CD8-positive, alpha-beta T cell (primary cell): ENCODE measurements at regions of chr2 and their contacts with region 1.

Region 1: DNA sequence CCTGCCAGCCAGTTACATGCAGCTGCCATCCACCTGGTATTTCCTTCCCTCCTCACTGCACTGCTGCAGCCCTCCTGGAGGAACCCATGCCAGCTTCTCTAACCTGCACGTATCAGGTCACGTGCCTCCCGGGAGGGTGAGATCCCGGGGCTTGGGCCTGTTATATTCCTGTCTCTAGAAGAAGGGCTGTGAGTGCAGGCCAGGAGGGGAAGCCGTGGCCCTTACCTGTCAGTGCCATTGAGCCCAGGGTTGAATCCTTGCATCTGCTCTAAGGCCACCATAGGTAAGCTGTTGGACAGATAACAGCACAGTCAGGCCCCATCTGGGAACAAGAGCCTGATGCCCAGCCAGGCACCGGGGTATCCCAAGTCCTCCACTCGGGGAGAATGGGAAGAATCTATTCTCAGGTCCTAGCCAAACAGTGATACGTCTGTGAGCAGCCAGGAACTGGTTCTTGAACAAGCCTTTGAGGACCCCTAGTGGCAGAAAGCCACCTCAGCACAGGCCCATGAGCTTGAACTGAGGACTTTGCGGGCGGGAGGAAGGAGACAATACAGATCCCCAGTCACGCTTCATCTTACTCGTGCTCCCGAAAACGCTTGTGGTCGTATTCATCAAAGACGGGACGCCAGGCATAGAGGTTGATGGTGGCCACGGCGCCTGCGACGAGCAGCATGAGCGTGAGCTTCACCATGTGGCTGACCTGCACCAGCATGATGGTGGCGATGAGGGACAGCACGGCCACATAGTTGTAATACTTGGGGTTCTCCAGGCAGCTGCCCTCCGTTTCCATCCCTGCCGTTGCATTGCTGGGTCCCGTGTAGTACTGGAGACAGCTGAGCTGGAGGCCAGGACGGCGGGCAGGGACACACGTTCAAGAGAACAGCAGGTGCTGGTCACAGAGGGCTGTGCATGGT is 34.4 kb downstream of the CENPO start:
- DNase-seq: peak; percentile 52 to 86 (median 71)
- ATAC-seq: peak; percentile 93
- H3K4me3 ChIP-seq: no peak overlapping the region
- H3K4me3 Mint-ChIP-seq: no peak overlapping the region
- H3K27ac ChIP-seq: peak overlapping the region in 1 of 2 experiments; percentile 49
- H3K27ac Mint-ChIP-seq: no peak overlapping the region
- H3K4me1 ChIP-seq: no peaks in the 10 kb centered on the region
- H3K4me1 Mint-ChIP-seq: peaks cover 12% of the 10 kb centered on the region
- H3K27me3 ChIP-seq: no peaks in the 10 kb centered on the region
- H3K27me3 Mint-ChIP-seq: no peaks in the 10 kb centered on the region
- CTCF ChIP-seq: peak; percentile 67

Region 2: GRCh38 chr2:24404491-24404921 is 423.1 kb before region 1 on chr2:
- CTCF ChIA-PET with region 1: interaction called, 209 read pairs
- POLR2A ChIA-PET with region 1: interaction called, 3 read pairs
- intact Hi-C with region 1: no loop called
- DNase-seq: no peak
- ATAC-seq: no peak
- H3K4me3 ChIP-seq: no peak overlapping the region
- H3K4me3 Mint-ChIP-seq: no peak overlapping the region
- H3K27ac ChIP-seq: no peak overlapping the region
- H3K27ac Mint-ChIP-seq: no peak overlapping the region
- H3K4me1 ChIP-seq: no peaks in the 10 kb centered on the region
- H3K4me1 Mint-ChIP-seq: peaks cover 4% of the 10 kb centered on the region
- H3K27me3 ChIP-seq: peaks cover 0 to 4% of the 10 kb centered on the region in 2 experiments
- H3K27me3 Mint-ChIP-seq: peaks cover 9% of the 10 kb centered on the region
- CTCF ChIP-seq: no peak

Region 3: GRCh38 chr2:24421668-24422067 is 405.9 kb before region 1 on chr2:
- CTCF ChIA-PET with region 1: interaction called, 27 read pairs
- POLR2A ChIA-PET with region 1: no interaction called
- intact Hi-C with region 1: no loop called
- DNase-seq: peak; percentile 13 to 69 (median 51)
- ATAC-seq: no peak
- H3K4me3 ChIP-seq: no peak overlapping the region
- H3K4me3 Mint-ChIP-seq: no peak overlapping the region
- H3K27ac ChIP-seq: no peak overlapping the region
- H3K27ac Mint-ChIP-seq: no peak overlapping the region
- H3K4me1 ChIP-seq: no peaks in the 10 kb centered on the region
- H3K4me1 Mint-ChIP-seq: no peaks in the 10 kb centered on the region
- H3K27me3 ChIP-seq: no peaks in the 10 kb centered on the region
- H3K27me3 Mint-ChIP-seq: no peaks in the 10 kb centered on the region
- CTCF ChIP-seq: no peak

Region 4: DNA sequence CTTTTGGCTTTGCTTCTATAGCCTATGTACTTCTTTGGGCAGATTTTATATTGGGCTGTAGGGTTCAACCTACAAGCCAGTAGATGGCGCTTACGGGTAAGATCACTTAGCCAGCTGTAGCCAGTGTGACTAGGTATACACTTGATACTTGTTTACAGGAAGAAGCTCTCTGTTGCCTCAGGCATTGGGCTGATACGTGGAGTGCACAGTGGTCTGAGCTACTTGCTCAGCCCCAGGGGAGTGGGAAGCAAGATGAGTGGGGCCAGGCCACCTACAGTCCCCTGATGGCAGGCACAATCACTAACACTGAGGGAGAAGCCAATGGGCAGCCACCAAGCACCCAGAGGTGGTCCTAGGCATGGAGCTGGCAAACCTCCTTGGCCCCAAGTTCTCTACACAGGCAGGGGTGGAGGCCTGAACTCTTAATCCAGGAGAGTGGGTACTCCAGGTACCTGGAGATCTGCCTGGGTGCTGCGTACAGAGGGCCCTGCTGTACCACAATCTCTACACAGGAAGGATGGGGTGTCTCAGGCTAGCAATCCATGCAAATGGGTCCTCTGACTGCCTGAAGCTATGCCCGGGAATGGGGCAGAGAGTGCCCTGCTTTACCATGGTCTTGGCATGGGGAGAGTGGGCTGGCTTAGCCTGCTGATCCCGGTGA is 214.3 kb before region 1 on chr2:
- CTCF ChIA-PET with region 1: no interaction called
- POLR2A ChIA-PET with region 1: no interaction called
- intact Hi-C with region 1: loop called in 1 of 2 experiments (anchors 1 kb)
- DNase-seq: peak in 4 of 9 experiments; percentile 6 to 74 (median 42)
- ATAC-seq: peak; percentile 74
- H3K4me3 ChIP-seq: no peak overlapping the region
- H3K4me3 Mint-ChIP-seq: no peak overlapping the region
- H3K27ac ChIP-seq: peak overlapping the region in 1 of 2 experiments; percentile 51
- H3K27ac Mint-ChIP-seq: peak overlapping the region; percentile 68
- H3K4me1 ChIP-seq: peaks cover 7% of the 10 kb centered on the region
- H3K4me1 Mint-ChIP-seq: peaks cover 22% of the 10 kb centered on the region
- H3K27me3 ChIP-seq: no peaks in the 10 kb centered on the region
- H3K27me3 Mint-ChIP-seq: no peaks in the 10 kb centered on the region
- CTCF ChIP-seq: peak; percentile 23

Region 5: GRCh38 chr2:24708537-24709152 is 118.9 kb before region 1 on chr2:
- CTCF ChIA-PET with region 1: no interaction called
- POLR2A ChIA-PET with region 1: no interaction called
- intact Hi-C with region 1: no loop called
- DNase-seq: no peak
- ATAC-seq: no peak
- H3K4me3 ChIP-seq: no peak overlapping the region
- H3K4me3 Mint-ChIP-seq: no peak overlapping the region
- H3K27ac ChIP-seq: no peak overlapping the region
- H3K27ac Mint-ChIP-seq: peak overlapping the region; percentile 12
- H3K4me1 ChIP-seq: no peaks in the 10 kb centered on the region
- H3K4me1 Mint-ChIP-seq: no peaks in the 10 kb centered on the region
- H3K27me3 ChIP-seq: no peaks in the 10 kb centered on the region
- H3K27me3 Mint-ChIP-seq: no peaks in the 10 kb centered on the region
- CTCF ChIP-seq: no peak

Region 6: DNA sequence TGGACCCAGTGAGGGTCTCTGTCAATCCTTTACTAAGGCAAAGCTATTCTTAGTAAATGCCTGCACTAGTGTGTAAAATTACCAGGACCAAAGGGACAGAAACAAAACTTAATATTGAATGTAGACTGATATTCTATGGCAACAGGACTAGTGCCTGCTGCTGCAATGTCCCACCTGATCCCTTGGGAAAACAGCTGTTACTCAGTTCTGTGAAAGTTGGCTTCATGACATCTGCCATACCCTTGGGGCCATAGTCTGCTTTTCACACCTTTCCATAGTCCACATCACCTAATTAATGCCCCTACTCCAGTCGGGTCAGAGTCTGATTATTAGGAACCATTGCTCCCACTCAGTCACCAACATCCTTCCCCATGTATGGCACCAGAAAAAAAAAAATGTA is 129.6 kb after region 1 on chr2:
- CTCF ChIA-PET with region 1: no interaction called
- POLR2A ChIA-PET with region 1: no interaction called
- intact Hi-C with region 1: no loop called
- DNase-seq: no peak
- ATAC-seq: no peak
- H3K4me3 ChIP-seq: no peak overlapping the region
- H3K4me3 Mint-ChIP-seq: no peak overlapping the region
- H3K27ac ChIP-seq: no peak overlapping the region
- H3K27ac Mint-ChIP-seq: no peak overlapping the region
- H3K4me1 ChIP-seq: no peaks in the 10 kb centered on the region
- H3K4me1 Mint-ChIP-seq: peaks cover 9% of the 10 kb centered on the region
- H3K27me3 ChIP-seq: no peaks in the 10 kb centered on the region
- H3K27me3 Mint-ChIP-seq: no peaks in the 10 kb centered on the region
- CTCF ChIP-seq: no peak

Region 7: GRCh38 chr2:25131567-25132298 is 304.2 kb after region 1 on chr2:
- CTCF ChIA-PET with region 1: interaction called, 6 read pairs
- POLR2A ChIA-PET with region 1: no interaction called
- intact Hi-C with region 1: loop called in 1 of 2 experiments (anchors 1 kb)
- DNase-seq: peak in 3 of 9 experiments; percentile 21 to 27 (median 25)
- ATAC-seq: peak; percentile 34
- H3K4me3 ChIP-seq: no peak overlapping the region
- H3K4me3 Mint-ChIP-seq: peak overlapping the region; percentile 77
- H3K27ac ChIP-seq: no peak overlapping the region
- H3K27ac Mint-ChIP-seq: no peak overlapping the region
- H3K4me1 ChIP-seq: no peaks in the 10 kb centered on the region
- H3K4me1 Mint-ChIP-seq: peaks cover 12% of the 10 kb centered on the region
- H3K27me3 ChIP-seq: peaks cover 18 to 22% of the 10 kb centered on the region in 2 experiments
- H3K27me3 Mint-ChIP-seq: peaks cover 48% of the 10 kb centered on the region
- CTCF ChIP-seq: no peak